Activated T-helper 2 cell treated with anti-CD3 and anti-CD28 coated beads, Interferon-gamma antibody, Interleukin-2, Interleukin-4, amounts not matched to agents 10 μg/mL and 5 μg/mL and 100 μg/mL, durations not matched to agents 14 hours and 24 hours and 36 hours (primary cell): ENCODE measurements at regions of chr2 and their contacts with region 1.

Region 1: DNA sequence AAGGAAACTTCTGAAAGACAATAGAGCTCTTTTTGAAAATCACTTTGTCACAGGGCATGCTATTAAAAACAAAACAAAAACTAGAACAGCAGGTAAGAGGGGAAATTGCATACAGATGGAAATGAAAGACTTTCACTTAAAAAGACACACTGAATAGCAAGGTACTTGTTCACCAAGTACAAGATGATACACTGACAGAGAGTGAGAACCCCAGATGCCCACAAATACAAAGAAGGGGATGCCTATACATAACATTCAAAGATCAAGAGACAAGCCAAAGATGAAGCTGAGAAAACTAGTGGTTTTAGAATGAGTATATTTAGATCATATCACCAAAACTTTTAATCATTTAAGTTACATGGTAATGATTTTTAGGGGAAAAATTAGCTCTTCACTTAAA is 60.7 kb downstream of the ASXL2 start:
- DNase-seq: no peak
- H3K4me3 Mint-ChIP-seq: no peak overlapping the region
- H3K27ac Mint-ChIP-seq: peak overlapping the region; percentile 82
- H3K4me1 Mint-ChIP-seq: peaks cover 57% of the 10 kb centered on the region
- H3K27me3 Mint-ChIP-seq: no peaks in the 10 kb centered on the region

Region 2: GRCh38 chr2:25831746-25832449 is 14.3 kb after region 1 on chr2:
- intact Hi-C with region 1: loop called (anchors 1 kb)
- DNase-seq: no peak
- H3K4me3 Mint-ChIP-seq: peak overlapping the region; percentile 39
- H3K27ac Mint-ChIP-seq: peak overlapping the region; percentile 77
- H3K4me1 Mint-ChIP-seq: peaks cover 53% of the 10 kb centered on the region
- H3K27me3 Mint-ChIP-seq: no peaks in the 10 kb centered on the region

Region 3: GRCh38 chr2:25920326-25920725 is 102.7 kb after region 1 on chr2:
- intact Hi-C with region 1: no loop called
- DNase-seq: no peak
- H3K4me3 Mint-ChIP-seq: no peak overlapping the region
- H3K27ac Mint-ChIP-seq: no peak overlapping the region
- H3K4me1 Mint-ChIP-seq: peaks cover 7% of the 10 kb centered on the region
- H3K27me3 Mint-ChIP-seq: peaks cover 13% of the 10 kb centered on the region

Region 4: GRCh38 chr2:26008822-26009566 is 191.4 kb after region 1 on chr2:
- intact Hi-C with region 1: no loop called
- DNase-seq: no peak
- H3K4me3 Mint-ChIP-seq: no peak overlapping the region
- H3K27ac Mint-ChIP-seq: no peak overlapping the region
- H3K4me1 Mint-ChIP-seq: peaks cover 2% of the 10 kb centered on the region
- H3K27me3 Mint-ChIP-seq: no peaks in the 10 kb centered on the region